Dorsolateral prefrontal cortex (tissue), 120 donors: ENCODE measurements at regions of chr4 and their contacts with region 1.

Region 1: DNA sequence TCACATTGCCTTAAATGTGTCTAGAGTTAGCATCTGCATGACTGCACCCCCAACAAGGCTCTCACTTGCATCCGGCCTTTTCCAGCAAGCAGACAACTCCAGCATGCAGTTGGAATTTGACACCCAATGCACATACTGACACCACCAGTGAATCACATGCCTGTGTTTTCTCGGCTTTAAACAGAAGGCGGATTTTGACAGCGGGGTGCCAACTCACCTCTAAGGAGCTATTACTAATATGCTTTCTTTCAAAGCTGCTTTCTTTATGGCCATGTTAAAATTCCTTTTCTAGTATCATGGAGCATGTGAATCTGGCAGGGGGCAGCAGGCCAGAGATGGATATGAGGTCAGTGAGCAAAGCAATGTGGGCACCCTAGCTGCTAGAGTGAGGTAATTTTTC is 78.0 kb upstream of the CLNK start:
- DNase-seq: no peak
- H3K4me3 ChIP-seq: no peak overlapping the region
- H3K27ac ChIP-seq: no peak overlapping the region
- H3K27me3 ChIP-seq: no peaks in the 10 kb centered on the region
- CTCF ChIP-seq: no peak

Region 2: DNA sequence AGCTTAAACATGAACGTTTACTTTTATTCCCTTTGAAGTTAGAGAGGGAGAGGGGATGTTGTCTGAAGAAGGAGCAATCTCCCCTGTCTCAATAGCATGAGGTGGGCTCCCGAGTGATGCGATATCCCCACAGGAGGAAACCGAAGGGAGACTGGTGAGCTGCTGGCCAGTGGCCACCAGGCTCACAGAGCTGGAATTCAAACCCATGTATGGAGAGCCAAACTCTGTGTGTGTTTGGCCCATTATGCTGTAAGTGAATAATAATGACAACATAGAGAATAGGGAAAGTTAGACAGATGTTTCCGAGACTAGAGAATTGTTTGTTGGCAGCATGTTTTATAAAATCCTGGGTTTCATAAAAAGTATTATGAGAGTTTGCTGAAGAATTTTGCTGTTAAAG is 11.8 kb before region 1 on chr4:
- intact Hi-C with region 1: loop called in 1 of 2 experiments (anchors 2 kb)
- DNase-seq: no peak
- H3K4me3 ChIP-seq: no peak overlapping the region
- H3K27ac ChIP-seq: no peak overlapping the region
- H3K27me3 ChIP-seq: peaks cover 0 to 24% (median 0%) of the 10 kb centered on the region in 45 donors
- CTCF ChIP-seq: no peak

Region 3: DNA sequence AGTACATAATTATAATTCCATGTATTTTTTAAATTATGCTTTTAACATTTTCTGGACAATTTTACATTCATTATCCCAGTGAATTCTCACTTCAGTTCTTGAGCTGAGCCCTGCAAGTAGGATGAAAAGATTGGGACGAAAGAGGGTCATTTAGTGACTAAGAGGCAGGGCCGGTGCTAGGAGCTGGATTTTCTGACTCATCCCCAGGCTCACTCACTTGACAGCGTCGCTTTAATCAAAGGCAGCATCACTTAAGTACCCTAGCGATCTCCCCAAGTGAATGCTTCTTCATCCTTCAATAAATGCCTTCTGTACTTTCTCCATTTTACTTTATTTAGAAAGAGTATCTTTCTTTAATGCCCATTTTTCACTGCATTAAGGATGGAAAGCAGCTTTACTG is 402.5 kb after region 1 on chr4:
- intact Hi-C with region 1: no loop called
- DNase-seq: no peak
- H3K4me3 ChIP-seq: no peak overlapping the region
- H3K27ac ChIP-seq: no peak overlapping the region
- H3K27me3 ChIP-seq: no peaks in the 10 kb centered on the region
- CTCF ChIP-seq: no peak